ENCODE measurements at regions of chr5 and their contacts with region 1.

Region 1: GRCh38 chr5:149317281-149318048 is 27.8 kb upstream of the GRPEL2 start:
- DNase-seq: no peak
- H3K4me3 ChIP-seq: no peak overlapping the region
- H3K27ac ChIP-seq: peak overlapping the region in 3 of 4 donors; percentile 9 to 64 (median 40)
- H3K4me1 ChIP-seq: peaks cover 0 to 24% (median 17%) of the 10 kb centered on the region in 4 donors
- H3K27me3 ChIP-seq: no peaks in the 10 kb centered on the region
- CTCF ChIP-seq: peak; percentile 48 to 77 (median 68)
- EP300 ChIP-seq: no peak
- POLR2A ChIP-seq: no peak

Region 2: GRCh38 chr5:149344151-149344550 is 26.7 kb after region 1 on chr5:
- intact Hi-C with region 1: loop called (anchors 1 kb)
- DNase-seq: no peak
- H3K4me3 ChIP-seq: no peak overlapping the region
- H3K27ac ChIP-seq: peak overlapping the region in 3 of 4 donors; percentile 85 to 87 (median 86)
- H3K4me1 ChIP-seq: peaks cover 0 to 16% (median 13%) of the 10 kb centered on the region in 4 donors
- H3K27me3 ChIP-seq: no peaks in the 10 kb centered on the region
- CTCF ChIP-seq: no peak
- EP300 ChIP-seq: no peak
- POLR2A ChIP-seq: no peak

Region 3: GRCh38 chr5:149367249-149367971 is 49.9 kb after region 1 on chr5:
- intact Hi-C with region 1: loop called (anchors 5 kb)
- DNase-seq: peak; percentile 84
- H3K4me3 ChIP-seq: peak overlapping the region in 2 of 4 donors; percentile 15 to 20
- H3K27ac ChIP-seq: peak overlapping the region; percentile 59 to 80 (median 69)
- H3K4me1 ChIP-seq: peaks cover 0 to 37% (median 36%) of the 10 kb centered on the region in 4 donors
- H3K27me3 ChIP-seq: no peaks in the 10 kb centered on the region
- CTCF ChIP-seq: peak; percentile 61 to 82 (median 70)
- EP300 ChIP-seq: no peak
- POLR2A ChIP-seq: no peak

Region 4: GRCh38 chr5:149567226-149567625 is 249.8 kb after region 1 on chr5:
- intact Hi-C with region 1: loop called (anchors 5 kb)
- DNase-seq: no peak
- H3K4me3 ChIP-seq: no peak overlapping the region
- H3K27ac ChIP-seq: no peak overlapping the region
- H3K4me1 ChIP-seq: peaks cover 0 to 29% (median 24%) of the 10 kb centered on the region in 4 donors
- H3K27me3 ChIP-seq: no peaks in the 10 kb centered on the region
- CTCF ChIP-seq: no peak
- EP300 ChIP-seq: no peak
- POLR2A ChIP-seq: no peak